Breast epithelium (tissue), 4 donors: ENCODE measurements at regions of chr10 and their contacts with region 1.

Region 1: GRCh38 chr10:129551767-129552518 is 84.9 kb downstream of the MGMT start:
- DNase-seq: no peak
- H3K4me3 ChIP-seq: no peak overlapping the region
- H3K27ac ChIP-seq: no peak overlapping the region
- H3K4me1 ChIP-seq: no peaks in the 10 kb centered on the region
- H3K27me3 ChIP-seq: no peaks in the 10 kb centered on the region
- CTCF ChIP-seq: no peak
- POLR2A ChIP-seq: no peak

Region 2: GRCh38 chr10:128419466-128420019 is 1132.4 kb before region 1 on chr10:
- intact Hi-C with region 1: loop called (anchors 10 kb)
- DNase-seq: no peak
- H3K4me3 ChIP-seq: no peak overlapping the region
- H3K27ac ChIP-seq: no peak overlapping the region
- H3K4me1 ChIP-seq: no peaks in the 10 kb centered on the region
- H3K27me3 ChIP-seq: no peaks in the 10 kb centered on the region
- CTCF ChIP-seq: no peak
- POLR2A ChIP-seq: no peak